ENCODE measurements at regions of chr15 and their contacts with region 1.

Region 1: GRCh38 chr15:77496710-77497103 is 76.0 kb downstream of the HMG20A start:
- DNase-seq: peak; percentile 95
- H3K4me3 ChIP-seq: peak overlapping the region; percentile 19; the same call in 1 of the 2 replicates
- CTCF ChIP-seq: peak; percentile 93

Region 2: DNA sequence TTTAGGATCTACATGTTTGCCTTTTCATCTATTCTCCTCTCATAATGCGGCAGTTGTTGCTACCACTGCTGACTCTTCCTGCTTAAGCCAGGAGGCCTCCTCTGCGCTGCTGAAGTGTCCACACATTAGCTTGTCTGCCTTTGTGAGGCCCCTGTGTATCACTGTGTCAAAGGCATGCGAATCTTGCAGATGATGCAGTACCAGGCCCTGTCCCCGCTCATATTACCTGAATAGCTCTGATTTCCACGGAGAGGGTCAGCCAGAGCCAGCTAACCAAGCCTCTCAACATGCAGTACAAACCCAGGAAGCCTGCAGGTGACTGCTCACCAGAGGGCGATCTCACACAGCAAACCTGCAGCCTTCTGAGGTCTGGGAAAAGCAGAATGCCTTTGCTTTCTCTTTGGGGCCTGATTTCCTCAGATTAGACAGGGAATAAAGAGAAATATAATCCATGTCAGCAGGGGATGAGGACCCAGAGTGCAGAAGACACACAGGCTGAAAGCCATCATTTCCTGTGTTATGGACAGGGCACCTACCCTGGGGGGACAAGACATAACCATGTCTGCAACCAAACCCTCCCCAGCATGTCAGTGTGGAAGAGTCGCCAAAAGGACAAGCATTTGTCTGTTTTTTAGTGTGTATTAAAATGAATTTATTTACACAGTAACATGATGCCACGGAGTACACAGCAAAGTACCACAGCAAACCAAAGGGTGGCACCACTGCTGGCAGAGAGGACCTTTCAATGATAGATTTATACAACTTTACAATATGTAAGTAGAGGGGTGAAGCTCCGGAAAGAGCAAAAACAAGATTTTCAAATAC is 389.0 kb before region 1 on chr15:
- CTCF ChIA-PET with region 1: interaction called, 14 read pairs
- POLR2A ChIA-PET with region 1: no interaction called
- DNase-seq: no peak
- H3K4me3 ChIP-seq: no peak overlapping the region
- CTCF ChIP-seq: peak; percentile 82

Region 3: DNA sequence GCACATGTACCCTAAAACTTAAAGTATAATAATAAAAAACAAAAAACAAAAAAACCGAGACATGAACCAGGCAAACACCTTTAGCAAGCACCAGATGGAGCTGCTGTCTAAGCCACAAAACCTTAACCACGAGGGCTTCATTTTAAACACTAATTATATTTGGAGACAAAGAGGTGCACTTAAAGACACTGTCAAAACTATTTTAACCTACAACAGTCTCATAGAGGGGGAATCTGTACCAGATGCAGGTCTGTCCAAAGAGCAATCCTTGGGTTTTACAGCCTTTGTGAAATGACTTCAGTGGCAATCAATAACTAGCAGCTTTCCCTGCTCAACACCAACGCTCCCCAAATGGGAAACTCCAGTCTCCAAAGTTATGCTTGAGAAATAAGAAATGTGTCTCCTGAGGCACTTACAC is 310.1 kb before region 1 on chr15:
- CTCF ChIA-PET with region 1: interaction called, 29 read pairs
- POLR2A ChIA-PET with region 1: no interaction called
- DNase-seq: no peak
- H3K4me3 ChIP-seq: no peak overlapping the region
- CTCF ChIP-seq: peak; percentile 32

Region 4: GRCh38 chr15:77402740-77403379 is 93.8 kb before region 1 on chr15:
- CTCF ChIA-PET with region 1: no interaction called
- POLR2A ChIA-PET with region 1: no interaction called
- DNase-seq: no peak
- H3K4me3 ChIP-seq: no peak overlapping the region
- CTCF ChIP-seq: no peak

Region 5: GRCh38 chr15:77419836-77420609 is 76.7 kb before region 1 on chr15 and contains the start of gene PEAK1:
- CTCF ChIA-PET with region 1: interaction called, 10 read pairs
- POLR2A ChIA-PET with region 1: interaction called, 4 read pairs
- DNase-seq: peak; percentile 91
- H3K4me3 ChIP-seq: peak within 1 kb of the TSS; percentile 83
- CTCF ChIP-seq: no peak

Region 6: DNA sequence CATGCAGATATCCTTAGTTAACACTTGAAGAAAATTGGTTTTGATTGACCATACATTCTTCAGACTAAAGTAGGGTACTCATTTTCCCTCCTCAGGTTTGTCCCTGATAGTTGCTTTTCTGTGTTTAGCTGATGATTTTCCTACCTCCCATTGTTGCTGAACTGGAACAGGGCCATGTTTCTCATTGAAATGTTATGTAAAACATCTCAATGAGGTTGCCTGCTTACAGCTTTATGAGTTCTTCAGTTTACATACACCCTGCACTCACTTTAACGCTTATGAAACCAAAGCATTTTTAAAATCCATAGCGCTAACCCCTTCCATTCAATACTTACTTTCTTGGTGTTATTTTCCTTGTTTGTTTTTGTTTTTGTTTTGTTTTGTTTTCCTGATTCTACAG is 14.1 kb before region 1 on chr15:
- CTCF ChIA-PET with region 1: interaction called, 24 read pairs
- POLR2A ChIA-PET with region 1: no interaction called
- DNase-seq: peak; percentile 51
- H3K4me3 ChIP-seq: no peak overlapping the region
- CTCF ChIP-seq: no peak

Region 7: DNA sequence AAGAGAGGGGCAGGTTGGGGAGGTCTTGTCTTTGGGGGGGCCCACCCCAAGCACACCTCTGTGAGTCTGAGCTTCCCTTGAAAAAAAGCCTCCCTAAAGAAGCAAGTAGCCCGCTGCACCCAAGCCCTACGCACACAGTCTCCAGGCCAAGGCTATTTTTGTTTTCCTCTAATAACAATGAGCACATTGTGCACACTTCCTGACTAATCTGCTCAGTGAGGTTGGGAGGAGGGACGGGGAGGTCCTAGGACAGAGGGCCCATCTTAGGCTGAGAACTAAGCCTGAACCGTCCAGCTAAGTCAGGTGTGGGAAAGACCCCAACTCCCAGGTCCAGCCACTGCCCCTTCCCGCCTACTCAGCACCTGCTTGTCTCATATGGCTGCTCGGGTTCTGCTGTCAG is 11.2 kb after region 1 on chr15:
- CTCF ChIA-PET with region 1: interaction called, 26 read pairs
- POLR2A ChIA-PET with region 1: no interaction called
- DNase-seq: no peak
- H3K4me3 ChIP-seq: no peak overlapping the region
- CTCF ChIP-seq: no peak

Region 8: DNA sequence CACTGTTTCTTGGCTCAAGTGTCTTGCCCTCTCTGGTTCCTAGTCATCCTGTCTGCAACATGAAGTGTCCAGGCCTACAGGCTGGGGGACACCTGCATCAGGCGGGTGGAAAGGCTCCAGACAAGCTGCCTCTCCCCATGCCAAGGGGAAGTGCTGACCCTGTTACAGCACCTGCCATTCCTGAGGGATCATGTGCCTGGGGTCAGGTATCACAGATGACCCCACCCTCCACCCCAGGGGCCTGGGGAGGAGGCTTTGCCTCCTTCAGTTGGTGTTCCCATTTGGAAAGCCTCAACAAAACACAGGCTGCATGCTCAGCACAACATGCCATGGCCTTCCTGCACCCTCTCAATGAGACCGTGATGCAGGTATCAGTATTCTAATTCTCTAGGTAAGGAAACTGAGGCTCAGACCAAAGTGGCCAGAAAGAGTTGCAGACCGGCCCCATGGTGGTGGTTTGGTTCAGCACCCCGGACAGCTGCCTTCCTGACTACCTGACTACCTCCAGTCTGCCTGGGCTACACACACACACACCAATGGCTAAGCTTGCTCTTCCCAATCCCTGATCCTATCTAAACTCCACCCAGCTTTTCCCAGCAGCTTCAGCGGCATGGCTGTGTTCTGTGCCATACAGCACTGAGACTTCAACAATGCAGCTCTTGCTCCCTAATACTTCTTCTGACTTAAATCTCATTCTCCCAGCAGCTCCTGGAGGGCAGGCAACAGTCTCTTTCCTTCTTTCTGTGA is 205.7 kb after region 1 on chr15:
- CTCF ChIA-PET with region 1: no interaction called
- POLR2A ChIA-PET with region 1: no interaction called
- DNase-seq: no peak
- H3K4me3 ChIP-seq: no peak overlapping the region
- CTCF ChIP-seq: no peak

Region 9: DNA sequence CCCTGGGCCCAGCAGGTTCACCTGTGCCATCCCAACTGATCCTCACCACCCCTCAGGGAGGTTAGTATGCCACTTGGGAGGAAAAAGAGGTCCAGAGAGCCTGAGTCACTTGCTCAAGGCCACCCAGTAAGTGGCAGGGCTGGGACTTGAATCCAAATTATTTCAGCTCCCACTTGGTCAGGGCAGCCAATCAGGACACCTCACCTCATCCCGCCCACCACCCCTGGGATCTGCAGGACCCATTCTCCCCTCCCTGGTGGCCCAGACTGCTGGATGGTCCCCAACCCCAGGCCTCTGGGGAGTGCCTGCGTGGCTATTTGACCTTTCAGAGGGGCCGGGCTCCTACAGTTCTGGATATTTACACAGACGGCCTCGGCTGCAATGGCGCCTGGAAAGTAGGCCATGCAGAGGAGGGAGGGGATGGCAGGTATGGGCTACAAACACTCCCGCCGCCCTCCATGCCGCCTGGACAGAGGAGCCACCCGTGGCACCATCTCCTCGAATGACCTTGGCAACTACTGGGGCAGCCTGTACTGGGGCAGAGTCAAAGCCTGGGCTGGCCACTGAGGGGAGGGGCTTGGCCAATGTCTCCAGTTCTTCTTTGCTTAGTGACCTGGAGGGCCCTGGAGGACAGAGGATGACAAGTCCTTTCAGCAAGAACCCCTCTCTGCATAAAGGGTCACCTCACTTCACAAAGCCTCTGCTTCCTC is 289.6 kb after region 1 on chr15:
- CTCF ChIA-PET with region 1: no interaction called
- POLR2A ChIA-PET with region 1: no interaction called
- DNase-seq: no peak
- H3K4me3 ChIP-seq: no peak overlapping the region
- CTCF ChIP-seq: no peak

Region 10: GRCh38 chr15:77810130-77810571 is 313.4 kb after region 1 on chr15:
- CTCF ChIA-PET with region 1: no interaction called
- POLR2A ChIA-PET with region 1: no interaction called
- DNase-seq: no peak
- H3K4me3 ChIP-seq: no peak overlapping the region
- CTCF ChIP-seq: no peak

Measured in AG04449 (cell line).